Activated naive CD4-positive, alpha-beta T cell treated with anti-CD3 and anti-CD28 coated beads for 36 hours (primary cell): ENCODE measurements at regions of chr6 and their contacts with region 1.

Region 1: GRCh38 chr6:26097268-26097875 is 10.1 kb downstream of the HFE start:
- DNase-seq: peak; percentile 75
- H3K4me3 Mint-ChIP-seq: no peak overlapping the region
- H3K27ac Mint-ChIP-seq: no peak overlapping the region
- H3K4me1 Mint-ChIP-seq: peaks cover 8% of the 10 kb centered on the region
- H3K27me3 Mint-ChIP-seq: peaks cover 3% of the 10 kb centered on the region

Region 2: GRCh38 chr6:26065952-26066380 is 31.4 kb before region 1 on chr6:
- CTCF ChIA-PET with region 1: interaction called, 570 read pairs
- intact Hi-C with region 1: loop called (anchors 1 kb)
- DNase-seq: peak; percentile 72
- H3K4me3 Mint-ChIP-seq: no peak overlapping the region
- H3K27ac Mint-ChIP-seq: no peak overlapping the region
- H3K4me1 Mint-ChIP-seq: peaks cover 4% of the 10 kb centered on the region
- H3K27me3 Mint-ChIP-seq: no peaks in the 10 kb centered on the region